Heart right ventricle (tissue), 16 donors: ENCODE measurements at regions of chr14 and their contacts with region 1.

Region 1: DNA sequence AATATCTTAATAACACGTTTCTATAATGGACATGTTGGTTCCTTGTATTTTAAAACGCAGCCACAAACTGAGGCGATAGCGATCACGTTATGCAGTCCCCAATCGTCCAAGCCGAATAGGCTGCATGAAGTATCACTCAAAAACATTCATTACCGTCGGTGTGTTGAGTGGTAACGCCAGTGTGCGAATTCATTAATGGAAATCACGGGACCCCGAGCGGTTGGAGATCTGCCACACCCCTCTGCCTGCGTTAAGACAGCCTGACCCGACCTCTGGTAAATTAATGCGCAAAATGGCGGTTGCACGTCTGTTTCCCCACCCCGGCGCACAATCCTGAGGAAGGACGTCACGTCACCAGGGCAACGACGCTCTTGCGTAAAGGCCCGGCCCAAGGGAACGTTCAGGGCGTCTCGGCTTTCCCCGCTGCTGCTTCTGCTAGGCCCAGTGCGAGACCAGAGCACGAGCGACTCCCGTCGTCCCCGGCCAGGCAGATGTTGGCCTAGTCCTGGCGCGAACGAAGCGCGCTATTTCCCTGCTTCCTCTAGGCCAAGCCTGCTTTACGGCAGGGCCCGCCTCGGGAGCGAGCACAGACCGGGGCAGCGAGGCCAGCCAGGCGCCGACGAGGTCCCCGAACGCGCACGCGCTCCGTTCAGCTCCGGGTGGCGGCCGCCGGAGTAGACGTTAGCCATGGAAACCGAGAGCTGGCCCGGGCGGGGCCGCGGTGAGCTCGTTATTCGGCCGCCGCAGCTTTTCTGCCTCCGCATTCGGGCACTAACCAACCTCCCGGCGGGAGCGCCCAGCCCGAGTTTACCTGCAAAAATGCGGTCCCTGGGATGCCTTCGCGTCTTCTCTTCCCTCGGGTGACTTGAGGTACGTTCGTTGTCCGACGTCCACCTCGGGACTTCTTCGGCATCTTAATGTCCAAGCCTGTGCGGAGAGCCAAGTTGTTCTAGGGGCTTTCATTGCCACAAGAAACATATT is at the start of gene PCNX4:
- DNase-seq: peak; percentile 96 to 98
- ATAC-seq: peak; percentile 96 to 100 (median 98)
- H3K4me3 ChIP-seq: peak within 1 kb of the TSS; percentile 66 to 90 (median 74)
- H3K27ac ChIP-seq: peak within 1 kb of the TSS; percentile 96 to 99 (median 98)
- H3K4me1 ChIP-seq: peaks cover 0 to 46% (median 38%) of the 10 kb centered on the region in 9 donors
- H3K27me3 ChIP-seq: no peaks in the 10 kb centered on the region
- CTCF ChIP-seq: peak in 1 of 9 donors; percentile 4
- total RNA-seq, gene PCNX4: 24.7 to 56.7 (median 35.2) TPM

Region 2: GRCh38 chr14:60014402-60014801 is 77.4 kb before region 1 on chr14:
- intact Hi-C with region 1: no loop called
- DNase-seq: no peak
- ATAC-seq: no peak
- H3K4me3 ChIP-seq: no peak overlapping the region
- H3K27ac ChIP-seq: no peak overlapping the region
- H3K4me1 ChIP-seq: no peaks in the 10 kb centered on the region
- H3K27me3 ChIP-seq: no peaks in the 10 kb centered on the region
- CTCF ChIP-seq: no peak

Region 3: GRCh38 chr14:60151715-60152114 is 59.9 kb after region 1 on chr14:
- intact Hi-C with region 1: loop called in 1 of 10 experiments (anchors 5 kb)
- DNase-seq: peak; percentile 39 to 51
- ATAC-seq: peak; percentile 72 to 98 (median 89)
- H3K4me3 ChIP-seq: no peak overlapping the region
- H3K27ac ChIP-seq: peak overlapping the region in 5 of 10 donors; percentile 17 to 86 (median 42)
- H3K4me1 ChIP-seq: peaks cover 0 to 50% (median 26%) of the 10 kb centered on the region in 9 donors
- H3K27me3 ChIP-seq: no peaks in the 10 kb centered on the region
- CTCF ChIP-seq: no peak

Region 4: DNA sequence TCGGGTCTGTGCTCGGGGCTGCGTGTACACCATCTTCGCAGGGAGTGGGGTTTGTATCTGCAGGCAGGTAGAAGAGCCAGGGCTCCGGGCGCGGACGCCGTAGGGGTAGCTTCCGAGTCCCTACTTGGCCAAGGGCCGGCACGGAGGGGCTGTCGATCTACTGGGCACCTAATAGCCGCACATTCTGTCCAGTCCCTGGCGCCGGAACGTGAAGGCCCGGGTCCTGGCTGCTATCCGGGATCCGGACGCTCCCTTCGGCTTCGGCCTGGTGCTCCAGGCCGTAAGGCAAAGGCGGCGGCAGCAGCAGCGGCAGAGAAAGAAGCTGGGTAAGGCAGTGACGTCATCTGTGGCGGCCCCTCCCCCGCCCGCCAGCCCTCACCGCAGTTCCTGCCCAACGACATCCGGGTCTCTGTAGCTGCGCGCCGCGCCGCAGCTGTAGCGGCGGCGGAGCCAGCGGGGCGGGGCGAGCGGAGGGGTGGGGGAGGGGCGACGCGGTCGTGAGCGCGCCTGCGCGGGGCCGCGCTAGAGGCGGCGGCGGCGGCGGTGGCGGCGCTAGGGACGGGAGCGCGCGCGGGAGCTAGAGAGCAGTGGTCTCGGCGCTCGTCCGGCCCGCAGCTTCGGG is 157.0 kb after region 1 on chr14 and contains the start of gene PPM1A:
- intact Hi-C with region 1: loop called in 6 of 10 experiments (anchors 2 to 5 kb)
- DNase-seq: peak; percentile 95 to 97
- ATAC-seq: peak; percentile 93 to 98 (median 96)
- H3K4me3 ChIP-seq: peak within 1 kb of the TSS; percentile 71 to 96 (median 82)
- H3K27ac ChIP-seq: peak within 1 kb of the TSS; percentile 97 to 100 (median 99)
- H3K4me1 ChIP-seq: peaks cover 0 to 54% (median 34%) of the 10 kb centered on the region in 9 donors
- H3K27me3 ChIP-seq: no peaks in the 10 kb centered on the region
- CTCF ChIP-seq: no peak
- total RNA-seq, gene PPM1A: 79.9 to 122 (median 101) TPM